A673 (cell line): ENCODE measurements at regions of chr22 and their contacts with region 1.

Region 1: DNA sequence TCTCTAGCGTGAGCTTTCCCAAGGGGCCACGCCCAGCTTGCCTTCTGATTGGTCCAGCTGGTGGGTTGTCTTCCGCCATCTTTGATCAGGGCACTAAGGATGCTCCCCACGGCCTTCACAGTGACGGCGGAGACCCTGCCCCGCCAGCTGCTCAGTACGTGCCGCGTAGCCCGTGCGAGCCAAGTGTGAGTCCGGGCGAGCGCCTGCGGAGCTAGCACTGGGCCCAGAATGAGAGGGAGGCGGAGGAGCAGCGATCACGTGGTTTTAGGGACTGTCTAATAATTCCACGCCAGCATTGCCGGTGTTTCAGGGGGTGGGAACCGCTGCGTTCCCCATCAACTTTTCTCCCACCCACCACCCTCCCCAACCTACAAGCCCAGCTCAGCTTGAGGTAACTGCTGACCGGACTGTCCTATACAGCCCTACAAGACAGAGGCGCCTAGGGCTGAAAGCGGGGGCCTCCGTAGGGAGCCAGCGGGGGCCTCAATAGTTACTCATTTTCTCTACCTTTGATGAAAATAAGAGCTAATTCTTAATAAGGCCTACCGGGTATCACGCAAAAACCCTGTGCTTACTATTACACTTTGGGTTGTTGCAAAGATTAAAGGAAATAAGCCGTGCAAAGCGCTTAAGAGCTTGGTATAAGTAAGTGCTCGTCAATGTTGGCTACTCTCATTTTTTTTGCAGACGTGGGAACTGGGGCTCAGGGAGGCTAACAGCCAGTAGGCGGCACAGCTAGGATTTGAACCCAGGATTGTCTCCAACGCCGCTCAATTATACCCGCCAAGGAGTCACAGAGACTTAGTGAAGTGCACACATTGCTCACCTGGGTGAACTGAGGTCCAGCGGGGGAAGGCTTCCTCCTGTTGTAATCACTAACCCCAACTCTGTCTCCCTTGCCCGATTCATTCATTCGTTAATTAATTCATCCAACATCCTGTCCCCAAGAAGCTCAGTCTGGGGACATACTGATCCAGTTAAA is 1.3 kb upstream of the MTFP1 start:
- DNase-seq: peak; percentile 100
- H3K4me3 ChIP-seq: peak overlapping the region; percentile 60
- H3K27ac ChIP-seq: peak overlapping the region; percentile 97
- H3K4me1 ChIP-seq: peaks cover 50% of the 10 kb centered on the region
- H3K27me3 ChIP-seq: no peaks in the 10 kb centered on the region
- CTCF ChIP-seq: no peak

Region 2: DNA sequence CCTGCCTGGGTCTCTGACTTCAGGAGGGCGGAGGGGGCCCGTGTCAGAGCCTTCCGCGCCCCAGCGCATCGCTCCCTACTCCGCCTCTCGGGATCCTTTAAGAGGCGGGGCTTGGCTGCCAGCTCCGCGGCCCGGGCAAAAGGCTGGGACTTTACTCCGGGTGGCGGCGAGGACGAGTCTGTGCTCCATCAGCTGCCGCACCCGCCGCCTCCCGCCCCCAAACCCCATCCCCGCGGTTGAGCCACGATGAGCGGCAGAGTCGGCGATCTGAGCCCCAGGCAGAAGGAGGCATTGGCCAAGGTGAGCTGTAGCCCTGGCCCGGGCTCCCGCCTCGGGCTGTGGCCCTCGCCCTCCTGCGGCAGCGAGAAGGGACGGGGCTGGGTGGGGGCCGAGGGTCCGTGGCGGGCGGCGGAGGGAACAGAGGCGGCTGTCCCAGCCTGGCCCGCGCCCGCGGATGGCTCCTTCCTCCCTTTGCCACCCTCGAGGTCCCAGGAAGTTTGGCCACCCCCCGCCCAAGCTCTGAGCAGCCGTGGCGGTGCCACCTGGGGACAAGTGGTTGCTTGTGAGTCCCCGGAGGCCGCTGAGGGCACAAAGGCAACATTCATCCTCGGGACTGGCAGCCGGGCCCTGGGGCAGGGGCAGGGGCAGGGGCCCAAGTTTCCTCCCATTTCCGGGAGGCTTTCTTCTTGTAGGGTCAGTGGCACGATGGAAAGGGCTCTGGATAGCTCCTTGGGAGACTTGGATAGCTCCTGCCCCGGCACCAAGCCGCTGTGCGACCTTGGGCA is 27.2 kb before region 1 on chr22 and contains the start of gene SEC14L2:
- CTCF ChIA-PET with region 1: no interaction called
- POLR2A ChIA-PET with region 1: interaction called, 14 read pairs
- intact Hi-C with region 1: no loop called
- DNase-seq: peak; percentile 80
- H3K4me3 ChIP-seq: peak within 1 kb of the TSS; percentile 74
- H3K27ac ChIP-seq: peak within 1 kb of the TSS; percentile 62
- H3K4me1 ChIP-seq: peaks cover 26% of the 10 kb centered on the region
- H3K27me3 ChIP-seq: no peaks in the 10 kb centered on the region
- CTCF ChIP-seq: no peak
- total RNA-seq, gene SEC14L2: 14.4 and 19.4 TPM in 2 replicates

Region 3: DNA sequence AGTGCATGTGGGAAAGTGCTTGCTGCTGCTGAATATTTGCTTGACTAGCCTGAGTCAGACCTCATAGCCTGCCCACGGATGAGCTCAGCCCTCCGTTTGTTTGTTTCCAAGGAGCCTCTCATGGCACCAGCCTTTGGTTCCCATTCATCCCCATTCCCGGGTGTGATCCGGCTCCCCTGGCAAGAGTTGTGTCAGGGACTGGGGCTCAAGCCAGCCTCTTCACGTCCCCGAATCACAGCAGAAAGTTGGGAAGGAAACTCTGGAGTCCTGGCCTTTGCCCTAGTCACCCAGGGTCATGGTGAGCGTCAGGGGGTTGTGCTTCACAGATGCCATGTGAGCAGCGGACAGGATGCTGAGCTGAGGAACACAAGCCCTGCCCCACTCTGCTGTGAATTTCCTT is 33.7 kb after region 1 on chr22:
- CTCF ChIA-PET with region 1: no interaction called
- POLR2A ChIA-PET with region 1: no interaction called
- intact Hi-C with region 1: no loop called
- DNase-seq: no peak
- H3K4me3 ChIP-seq: no peak overlapping the region
- H3K27ac ChIP-seq: no peak overlapping the region
- H3K4me1 ChIP-seq: no peaks in the 10 kb centered on the region
- H3K27me3 ChIP-seq: no peaks in the 10 kb centered on the region
- CTCF ChIP-seq: no peak